Right lobe of liver (tissue), 6 donors: ENCODE measurements at regions of chr1 and their contacts with region 1.

Region 1: DNA sequence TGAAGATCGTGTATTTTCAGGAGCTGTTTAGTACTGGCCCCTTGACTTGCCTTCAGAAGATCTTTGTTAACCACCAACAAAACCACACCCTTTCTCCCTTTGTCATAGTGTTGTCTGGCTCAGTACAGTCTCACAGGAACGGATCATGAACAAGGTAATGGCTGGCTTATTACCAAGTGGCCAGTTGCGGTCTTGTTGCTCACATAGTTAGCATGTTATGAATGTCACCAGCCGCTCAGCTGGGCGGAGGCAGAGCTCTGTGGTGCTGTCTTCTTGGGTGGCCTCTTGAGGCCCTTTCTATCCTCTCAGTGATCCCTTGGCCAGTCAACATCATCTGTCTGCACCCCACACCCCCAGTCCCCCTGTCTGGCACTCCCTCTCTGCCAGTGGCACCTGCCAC is 21.4 kb downstream of the CNIH3 start:
- DNase-seq: no peak
- ATAC-seq: no peak
- H3K4me3 ChIP-seq: no peak overlapping the region
- H3K27ac ChIP-seq: no peak overlapping the region
- H3K4me1 ChIP-seq: no peaks in the 10 kb centered on the region
- H3K27me3 ChIP-seq: no peaks in the 10 kb centered on the region
- CTCF ChIP-seq: no peak
- POLR2A ChIP-seq: no peak

Region 2: DNA sequence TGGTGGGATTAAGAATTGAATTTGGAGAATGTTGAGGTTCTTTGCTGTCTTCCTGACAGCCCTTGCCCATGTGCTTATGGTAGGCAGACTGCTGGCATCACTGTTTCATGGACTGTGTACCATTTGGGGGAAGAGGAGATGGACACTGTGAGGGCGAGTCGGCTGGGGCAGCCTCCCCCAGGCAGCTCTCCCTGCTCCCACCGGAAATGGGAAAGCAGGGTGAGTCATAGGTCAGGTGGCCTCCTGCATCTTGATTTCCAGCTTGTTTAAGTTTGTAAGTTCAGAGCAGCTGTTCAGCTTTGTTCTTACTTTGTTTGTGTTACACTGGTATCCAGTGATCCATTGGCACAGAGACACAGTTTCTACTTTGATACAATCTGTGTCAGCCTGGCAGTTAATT is 108.6 kb before region 1 on chr1:
- intact Hi-C with region 1: loop called in 1 of 2 experiments (anchors 10 kb)
- DNase-seq: no peak
- ATAC-seq: peak in 1 of 4 donors; percentile 59
- H3K4me3 ChIP-seq: no peak overlapping the region
- H3K27ac ChIP-seq: no peak overlapping the region
- H3K4me1 ChIP-seq: no peaks in the 10 kb centered on the region
- H3K27me3 ChIP-seq: no peaks in the 10 kb centered on the region
- CTCF ChIP-seq: no peak
- POLR2A ChIP-seq: no peak